Caco-2 (cell line): ENCODE measurements at regions of chr1 and their contacts with region 1.

Region 1: DNA sequence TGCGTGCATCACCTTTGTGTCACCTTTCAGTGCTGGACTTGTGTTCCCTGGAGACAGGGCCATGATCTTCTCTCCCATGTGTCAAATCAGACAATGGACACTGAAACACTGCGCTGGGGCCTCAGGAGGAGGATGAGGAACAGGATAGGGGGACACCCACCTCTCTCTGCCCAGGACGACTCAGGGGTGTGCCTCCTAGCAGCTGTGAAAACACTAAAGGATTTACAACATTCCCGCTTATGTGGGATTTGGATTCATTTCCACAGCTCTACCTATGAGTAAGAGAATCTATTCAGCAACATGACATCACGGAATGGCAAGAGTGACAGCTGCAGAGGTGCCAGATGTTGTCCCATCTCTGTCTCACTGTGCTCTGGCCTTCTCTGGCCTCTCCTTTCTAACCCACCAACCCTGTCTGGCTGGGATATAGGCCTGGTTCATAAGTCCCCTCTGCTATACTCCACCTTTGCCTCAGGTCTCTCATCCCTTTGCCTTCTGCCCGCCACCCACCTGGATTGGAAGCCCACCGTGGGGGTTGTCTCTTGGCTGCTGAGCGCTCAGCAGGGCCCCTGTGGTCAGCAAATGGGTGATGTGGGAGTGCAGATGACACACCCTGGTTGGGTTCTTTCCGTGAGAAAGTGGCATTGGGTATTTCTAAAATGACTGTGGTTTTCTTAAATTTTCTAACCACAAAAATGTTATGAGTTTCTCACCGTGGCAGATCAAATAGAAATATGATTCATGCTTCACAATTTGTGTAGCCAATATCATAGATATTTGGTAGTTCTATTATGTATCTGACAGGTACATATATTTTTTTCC is 47.1 kb upstream of the TLR5 start:
- DNase-seq: no peak
- H3K4me3 ChIP-seq: no peak overlapping the region
- H3K4me3 Mint-ChIP-seq: no peak overlapping the region
- H3K27ac Mint-ChIP-seq: no peak overlapping the region
- H3K4me1 ChIP-seq: no peaks in the 10 kb centered on the region
- H3K4me1 Mint-ChIP-seq: peaks cover 17% of the 10 kb centered on the region
- H3K27me3 ChIP-seq: no peaks in the 10 kb centered on the region
- H3K27me3 Mint-ChIP-seq: no peaks in the 10 kb centered on the region
- CTCF ChIP-seq: no peak

Region 2: DNA sequence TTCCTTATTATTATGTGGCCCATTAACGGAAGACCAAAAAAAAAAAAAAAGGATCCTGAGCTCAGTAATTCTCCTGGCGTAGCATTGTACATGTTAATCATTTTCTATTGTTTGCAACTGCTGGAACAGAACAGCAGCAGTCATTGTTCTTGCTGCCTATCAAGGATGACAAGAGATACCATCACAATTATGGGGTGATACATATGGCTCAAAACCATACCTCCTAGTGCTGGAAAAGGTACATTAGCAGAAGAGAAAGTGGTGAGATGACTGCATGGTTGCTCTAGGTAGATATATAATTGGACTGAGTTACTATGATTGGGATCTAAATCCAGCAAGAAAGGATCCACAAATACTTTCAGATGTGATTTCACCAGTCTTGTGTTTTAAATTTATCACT is 33.8 kb before region 1 on chr1:
- CTCF ChIA-PET with region 1: no interaction called
- POLR2A ChIA-PET with region 1: no interaction called
- intact Hi-C with region 1: loop called (anchors 1 kb)
- DNase-seq: no peak
- H3K4me3 ChIP-seq: no peak overlapping the region
- H3K4me3 Mint-ChIP-seq: no peak overlapping the region
- H3K27ac Mint-ChIP-seq: no peak overlapping the region
- H3K4me1 ChIP-seq: no peaks in the 10 kb centered on the region
- H3K4me1 Mint-ChIP-seq: no peaks in the 10 kb centered on the region
- H3K27me3 ChIP-seq: no peaks in the 10 kb centered on the region
- H3K27me3 Mint-ChIP-seq: peaks cover 3% of the 10 kb centered on the region
- CTCF ChIP-seq: no peak